Vagina (tissue), 2 donors: ENCODE measurements at regions of chr1 and their contacts with region 1.

Region 1: GRCh38 chr1:23854568-23854967 is 13.5 kb downstream of the FUCA1 start:
- DNase-seq: no peak
- H3K4me3 ChIP-seq: no peak overlapping the region
- H3K27ac ChIP-seq: no peak overlapping the region
- H3K4me1 ChIP-seq: no peaks in the 10 kb centered on the region
- H3K27me3 ChIP-seq: no peaks in the 10 kb centered on the region
- CTCF ChIP-seq: no peak
- POLR2A ChIP-seq: no peak

Region 2: GRCh38 chr1:23816906-23817305 is 37.7 kb before region 1 on chr1:
- intact Hi-C with region 1: loop called (anchors 5 kb)
- DNase-seq: no peak
- H3K4me3 ChIP-seq: no peak overlapping the region
- H3K27ac ChIP-seq: no peak overlapping the region
- H3K4me1 ChIP-seq: no peaks in the 10 kb centered on the region
- H3K27me3 ChIP-seq: no peaks in the 10 kb centered on the region
- CTCF ChIP-seq: no peak
- POLR2A ChIP-seq: no peak